ENCODE measurements at regions of chr16 and their contacts with region 1.

Region 1: GRCh38 chr16:88700636-88701482 is 5.3 kb downstream of the RNF166 start:
- DNase-seq: peak; percentile 89 to 98 (median 96)
- ATAC-seq: peak; percentile 73
- H3K4me3 ChIP-seq: peak overlapping the region; percentile 82
- H3K4me3 Mint-ChIP-seq: peak overlapping the region; percentile 99
- H3K27ac ChIP-seq: peak overlapping the region; percentile 93 to 96
- H3K27ac Mint-ChIP-seq: peak overlapping the region; percentile 100
- H3K4me1 ChIP-seq: peaks cover 94% of the 10 kb centered on the region
- H3K4me1 Mint-ChIP-seq: peaks cover 70% of the 10 kb centered on the region
- H3K27me3 ChIP-seq: no peaks in the 10 kb centered on the region
- H3K27me3 Mint-ChIP-seq: no peaks in the 10 kb centered on the region
- CTCF ChIP-seq: no peak

Region 2: DNA sequence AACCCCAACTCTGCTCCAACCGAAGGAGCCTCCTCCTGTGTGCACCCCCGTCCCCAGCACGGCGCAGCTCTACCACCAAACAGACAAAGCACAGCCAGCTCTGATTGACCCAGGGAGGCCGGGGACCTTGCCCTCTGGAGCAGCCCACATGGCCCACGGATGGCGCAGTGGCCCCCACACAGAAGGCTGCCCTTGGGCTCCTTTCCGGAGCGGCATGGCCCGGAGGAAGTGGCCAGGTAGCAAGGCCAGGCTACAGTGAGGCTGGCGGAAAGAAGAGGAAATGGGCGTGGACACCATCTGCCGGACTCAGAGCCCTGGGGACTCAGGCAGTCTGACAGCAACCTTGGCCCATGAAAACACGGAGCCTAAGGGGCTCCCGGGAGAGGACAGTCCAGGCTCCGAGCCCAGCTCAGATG is 150.6 kb before region 1 on chr16:
- CTCF ChIA-PET with region 1: no interaction called
- POLR2A ChIA-PET with region 1: no interaction called
- intact Hi-C with region 1: no loop called
- DNase-seq: peak in 3 of 14 experiments; percentile 26 to 57 (median 46)
- ATAC-seq: no peak
- H3K4me3 ChIP-seq: peak overlapping the region; percentile 21
- H3K4me3 Mint-ChIP-seq: no peak overlapping the region
- H3K27ac ChIP-seq: no peak overlapping the region
- H3K27ac Mint-ChIP-seq: no peak overlapping the region
- H3K4me1 ChIP-seq: peaks cover 16% of the 10 kb centered on the region
- H3K4me1 Mint-ChIP-seq: no peaks in the 10 kb centered on the region
- H3K27me3 ChIP-seq: peaks cover 0 to 8% of the 10 kb centered on the region in 2 experiments
- H3K27me3 Mint-ChIP-seq: peaks cover 14% of the 10 kb centered on the region
- CTCF ChIP-seq: no peak

Region 3: DNA sequence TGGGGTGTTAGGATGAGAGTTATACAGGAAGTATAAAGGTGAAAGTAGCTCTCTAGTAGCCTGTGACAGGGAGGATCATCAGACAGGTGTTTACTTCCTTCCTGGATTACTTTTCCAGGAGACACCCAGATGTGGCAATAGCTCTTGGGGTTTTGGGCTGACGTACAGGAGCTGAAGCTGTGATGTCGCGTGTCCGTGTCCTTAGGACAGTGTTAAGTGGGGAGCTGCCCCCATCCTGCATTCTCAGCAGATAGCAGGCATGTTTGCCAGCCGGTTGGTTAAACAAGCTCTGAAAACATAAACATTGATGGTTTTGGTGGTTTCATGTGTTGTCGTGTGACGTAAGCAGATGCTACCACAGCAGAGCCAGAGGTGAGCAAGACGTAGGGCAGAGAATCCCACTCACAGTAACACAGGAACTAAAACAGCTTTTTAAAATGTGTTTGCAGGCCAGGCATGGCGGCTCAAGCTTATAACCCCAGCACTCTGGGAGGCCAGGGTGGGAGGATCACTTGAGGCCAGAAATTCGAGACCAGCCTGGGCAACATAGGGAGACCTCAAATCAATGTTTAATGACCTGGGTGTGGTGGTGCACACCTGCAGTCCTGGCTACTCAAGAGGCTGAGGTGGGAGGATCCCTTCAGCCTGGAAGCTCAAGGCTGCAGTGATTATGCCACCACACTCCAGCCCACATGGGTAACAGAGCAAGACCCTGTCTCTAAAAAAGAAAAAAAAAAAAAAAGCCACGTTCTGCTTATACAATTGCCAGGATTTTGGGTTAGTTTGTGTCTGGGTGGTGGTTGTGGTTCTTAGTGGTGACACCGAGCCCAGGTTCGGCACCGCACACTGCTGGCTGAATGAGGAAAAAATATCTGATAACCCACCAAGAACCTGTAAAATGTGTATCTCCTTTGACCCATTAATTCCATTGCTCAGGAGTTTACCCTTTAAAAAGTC is 80.7 kb before region 1 on chr16:
- CTCF ChIA-PET with region 1: no interaction called
- POLR2A ChIA-PET with region 1: interaction called, 21 read pairs
- intact Hi-C with region 1: no loop called
- DNase-seq: peak in 13 of 14 experiments; percentile 37 to 94 (median 59)
- ATAC-seq: peak; percentile 88
- H3K4me3 ChIP-seq: no peak overlapping the region
- H3K4me3 Mint-ChIP-seq: peak overlapping the region; percentile 61
- H3K27ac ChIP-seq: peak overlapping the region in 1 of 2 donors; percentile 71
- H3K27ac Mint-ChIP-seq: peak overlapping the region; percentile 90
- H3K4me1 ChIP-seq: peaks cover 43% of the 10 kb centered on the region
- H3K4me1 Mint-ChIP-seq: peaks cover 19% of the 10 kb centered on the region
- H3K27me3 ChIP-seq: no peaks in the 10 kb centered on the region
- H3K27me3 Mint-ChIP-seq: no peaks in the 10 kb centered on the region
- CTCF ChIP-seq: no peak

Region 4: DNA sequence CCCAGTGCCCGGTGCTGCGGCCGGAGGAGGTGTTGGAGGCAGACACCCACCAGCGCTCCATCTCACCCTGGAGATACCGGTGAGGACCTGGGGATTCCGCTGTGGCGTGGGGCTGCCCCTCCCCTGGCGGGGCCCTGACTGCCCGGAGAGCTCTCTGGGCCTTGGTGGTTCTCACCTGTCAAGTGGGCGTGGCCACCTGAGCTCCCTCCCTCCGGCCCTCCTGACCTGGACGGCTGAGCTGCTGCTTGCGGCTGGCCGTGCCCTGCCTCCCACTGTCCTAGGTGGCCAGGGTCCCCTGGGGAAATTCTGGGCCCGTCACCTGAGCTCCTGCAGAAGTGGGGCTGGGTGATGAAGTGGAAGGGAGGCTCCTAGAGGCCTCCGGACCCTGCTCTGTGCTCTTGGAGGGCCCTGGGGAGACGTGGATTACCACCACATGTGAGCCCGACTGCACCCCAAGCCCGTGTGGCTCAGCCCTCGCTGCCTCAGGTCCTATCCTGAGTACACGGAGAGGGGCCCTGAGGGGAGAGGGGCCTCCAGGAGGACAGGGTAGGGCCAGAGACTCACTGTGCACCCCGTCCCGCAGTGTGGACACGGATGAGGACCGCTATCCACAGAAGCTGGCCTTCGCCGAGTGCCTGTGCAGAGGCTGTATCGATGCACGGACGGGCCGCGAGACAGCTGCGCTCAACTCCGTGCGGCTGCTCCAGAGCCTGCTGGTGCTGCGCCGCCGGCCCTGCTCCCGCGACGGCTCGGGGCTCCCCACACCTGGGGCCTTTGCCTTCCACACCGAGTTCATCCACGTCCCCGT is 61.4 kb before region 1 on chr16:
- CTCF ChIA-PET with region 1: no interaction called
- POLR2A ChIA-PET with region 1: interaction called, 24 read pairs
- intact Hi-C with region 1: loop called in 1 of 2 experiments (anchors 5 kb)
- DNase-seq: peak in 1 of 14 experiments; percentile 48
- ATAC-seq: no peak
- H3K4me3 ChIP-seq: no peak overlapping the region
- H3K4me3 Mint-ChIP-seq: no peak overlapping the region
- H3K27ac ChIP-seq: no peak overlapping the region
- H3K27ac Mint-ChIP-seq: no peak overlapping the region
- H3K4me1 ChIP-seq: peaks cover 61% of the 10 kb centered on the region
- H3K4me1 Mint-ChIP-seq: peaks cover 39% of the 10 kb centered on the region
- H3K27me3 ChIP-seq: peaks cover 13 to 19% of the 10 kb centered on the region in 2 experiments
- H3K27me3 Mint-ChIP-seq: peaks cover 25% of the 10 kb centered on the region
- CTCF ChIP-seq: no peak

Region 5: DNA sequence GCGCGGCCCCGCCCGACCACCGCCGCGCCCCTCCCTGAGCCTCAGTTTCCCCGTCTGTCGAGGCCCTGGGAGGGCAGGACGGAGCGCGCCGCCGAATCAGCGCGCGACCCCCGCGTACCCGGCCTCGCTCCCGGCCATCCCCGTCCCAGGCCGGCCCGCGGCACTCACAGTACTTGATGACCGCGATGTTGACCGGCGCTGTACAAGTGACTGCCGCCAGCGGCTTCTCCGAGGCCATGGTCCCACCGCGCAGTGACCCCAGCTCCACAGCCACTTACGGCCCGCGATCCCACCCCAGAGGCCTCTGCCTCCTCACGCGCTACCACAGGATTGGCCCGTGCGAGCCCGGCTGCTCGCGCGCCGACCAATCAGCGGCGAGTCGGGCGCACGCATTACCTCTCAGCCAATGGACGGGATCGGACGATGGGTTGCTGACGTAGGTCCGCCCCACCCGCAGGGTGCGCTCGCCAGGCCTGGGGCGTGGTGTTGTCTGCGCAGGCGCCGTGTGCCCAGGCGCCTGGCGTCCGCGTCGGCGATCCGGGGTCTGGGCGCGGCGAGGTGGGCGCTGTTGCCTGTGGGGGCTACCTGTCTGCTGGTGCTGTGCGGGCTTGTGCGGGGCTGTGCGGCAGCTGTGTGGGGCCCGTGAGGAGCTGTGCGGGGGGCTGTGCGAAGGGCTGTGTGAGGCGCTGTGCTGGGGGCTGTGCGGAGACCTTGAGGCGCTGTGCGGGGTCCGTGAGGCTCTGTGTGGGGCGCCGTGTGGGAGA is 37.8 kb before region 1 on chr16 and contains the start of gene MVD:
- CTCF ChIA-PET with region 1: interaction called, 9 read pairs
- POLR2A ChIA-PET with region 1: interaction called, 10 read pairs
- intact Hi-C with region 1: loop called in 1 of 2 experiments (anchors 1 kb)
- DNase-seq: peak; percentile 87 to 98 (median 94)
- ATAC-seq: peak; percentile 97
- H3K4me3 ChIP-seq: peak within 1 kb of the TSS; percentile 84
- H3K4me3 Mint-ChIP-seq: peak within 1 kb of the TSS; percentile 94
- H3K27ac ChIP-seq: peak within 1 kb of the TSS; percentile 58 to 69
- H3K27ac Mint-ChIP-seq: peak within 1 kb of the TSS; percentile 91
- H3K4me1 ChIP-seq: peaks cover 19% of the 10 kb centered on the region
- H3K4me1 Mint-ChIP-seq: peaks cover 17% of the 10 kb centered on the region
- H3K27me3 ChIP-seq: no peaks in the 10 kb centered on the region
- H3K27me3 Mint-ChIP-seq: no peaks in the 10 kb centered on the region
- CTCF ChIP-seq: no peak
- total RNA-seq, gene MVD: 74.2 to 76.9 TPM

Region 6: DNA sequence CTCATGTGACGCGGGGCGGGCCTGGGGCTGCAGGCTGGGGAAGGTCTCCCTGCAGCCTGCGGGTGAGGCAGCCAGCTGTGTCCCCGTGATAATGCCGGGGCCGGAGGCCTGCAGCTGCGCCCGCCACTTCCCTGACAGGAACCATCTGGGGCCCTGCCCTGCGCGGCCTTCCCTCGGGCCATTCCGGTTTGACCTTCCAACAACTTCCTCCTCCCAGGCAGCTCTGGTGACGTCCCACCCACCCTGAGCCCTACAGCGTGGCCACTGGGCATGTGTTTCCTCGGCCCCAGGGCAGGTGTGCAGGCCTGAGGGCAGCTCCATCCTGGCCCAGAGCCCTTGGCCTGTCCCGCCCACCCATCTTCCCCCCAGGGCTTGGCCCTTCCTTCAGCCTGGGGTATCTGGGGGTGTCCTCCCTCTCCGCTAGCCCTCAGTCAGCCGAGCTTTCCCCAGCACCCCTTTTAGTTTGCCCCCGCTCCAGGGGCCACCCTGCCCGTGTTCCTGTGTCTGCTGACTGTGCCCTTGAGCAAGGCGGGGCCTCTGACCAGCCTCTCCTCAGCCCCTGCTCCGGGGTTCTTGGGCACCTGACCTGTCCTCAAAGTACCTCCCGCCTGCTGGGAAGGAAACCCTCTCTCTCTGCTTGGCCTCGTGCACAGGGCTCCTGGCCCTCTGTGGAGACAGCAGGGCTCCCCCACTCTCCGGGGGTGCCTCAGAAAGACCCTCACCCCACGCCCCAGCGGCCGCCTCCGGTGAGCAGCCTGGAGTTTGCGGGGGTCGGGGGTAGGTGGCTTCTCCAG is 276.4 kb after region 1 on chr16 and contains the start of gene CBFA2T3:
- CTCF ChIA-PET with region 1: no interaction called
- POLR2A ChIA-PET with region 1: no interaction called
- intact Hi-C with region 1: no loop called
- DNase-seq: peak in 3 of 14 experiments; percentile 19 to 53 (median 49)
- ATAC-seq: no peak
- H3K4me3 ChIP-seq: peak within 1 kb of the TSS; percentile 34
- H3K4me3 Mint-ChIP-seq: no peak within 1 kb of the TSS
- H3K27ac ChIP-seq: no peak within 1 kb of the TSS
- H3K27ac Mint-ChIP-seq: no peak within 1 kb of the TSS
- H3K4me1 ChIP-seq: peaks cover 11% of the 10 kb centered on the region
- H3K4me1 Mint-ChIP-seq: no peaks in the 10 kb centered on the region
- H3K27me3 ChIP-seq: peaks cover 36 to 41% of the 10 kb centered on the region in 2 experiments
- H3K27me3 Mint-ChIP-seq: peaks cover 27% of the 10 kb centered on the region
- CTCF ChIP-seq: no peak
- total RNA-seq, gene CBFA2T3: 0.80 to 1.6 TPM

Region 7: DNA sequence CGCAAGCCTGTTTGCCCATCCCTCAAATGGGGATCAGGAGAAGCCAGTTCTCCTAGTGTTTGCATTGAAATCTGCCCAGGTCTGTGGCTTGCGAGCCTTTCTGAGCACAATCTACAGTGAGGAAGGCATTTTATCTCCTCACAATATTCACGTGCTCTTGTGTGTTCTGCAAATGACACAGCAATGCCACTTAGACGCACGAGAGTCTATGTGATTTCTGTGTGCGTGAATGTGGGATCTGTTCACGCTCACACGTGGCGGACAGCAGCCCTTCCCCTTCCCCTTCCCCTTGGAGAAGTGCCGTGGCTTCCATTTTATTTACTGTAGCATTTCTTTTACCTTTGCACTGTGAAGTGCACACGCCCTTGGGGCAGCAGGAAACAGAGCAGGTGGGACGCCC is 293.8 kb after region 1 on chr16:
- CTCF ChIA-PET with region 1: no interaction called
- POLR2A ChIA-PET with region 1: no interaction called
- intact Hi-C with region 1: no loop called
- DNase-seq: no peak
- ATAC-seq: no peak
- H3K4me3 ChIP-seq: no peak overlapping the region
- H3K4me3 Mint-ChIP-seq: no peak overlapping the region
- H3K27ac ChIP-seq: no peak overlapping the region
- H3K27ac Mint-ChIP-seq: no peak overlapping the region
- H3K4me1 ChIP-seq: peaks cover 25% of the 10 kb centered on the region
- H3K4me1 Mint-ChIP-seq: peaks cover 15% of the 10 kb centered on the region
- H3K27me3 ChIP-seq: peaks cover 0 to 2% of the 10 kb centered on the region in 2 experiments
- H3K27me3 Mint-ChIP-seq: peaks cover 6% of the 10 kb centered on the region
- CTCF ChIP-seq: no peak